ENCODE measurements at regions of chr7 and their contacts with region 1.

Region 1: GRCh38 chr7:129611246-129612111 is at the start of gene NRF1:
- DNase-seq: peak; percentile 82 to 92 (median 85)
- H3K4me3 ChIP-seq: peak within 1 kb of the TSS; percentile 91 to 94 (median 93)
- H3K4me3 Mint-ChIP-seq: peak within 1 kb of the TSS; percentile 90 to 94
- H3K27ac ChIP-seq: peak within 1 kb of the TSS; percentile 92 to 99
- H3K27ac Mint-ChIP-seq: peak within 1 kb of the TSS; percentile 92 to 98 (median 95)
- H3K4me1 ChIP-seq: peaks cover 63 to 83% of the 10 kb centered on the region in 2 donors
- H3K4me1 Mint-ChIP-seq: peaks cover 68% of the 10 kb centered on the region
- H3K27me3 ChIP-seq: no peaks in the 10 kb centered on the region
- H3K27me3 Mint-ChIP-seq: peaks cover 0 to 2% (median 0%) of the 10 kb centered on the region in 3 donors
- CTCF ChIP-seq: no peak
- polyA plus RNA-seq, gene NRF1: 5.1 to 14.0 (median 7.7) TPM

Region 2: DNA sequence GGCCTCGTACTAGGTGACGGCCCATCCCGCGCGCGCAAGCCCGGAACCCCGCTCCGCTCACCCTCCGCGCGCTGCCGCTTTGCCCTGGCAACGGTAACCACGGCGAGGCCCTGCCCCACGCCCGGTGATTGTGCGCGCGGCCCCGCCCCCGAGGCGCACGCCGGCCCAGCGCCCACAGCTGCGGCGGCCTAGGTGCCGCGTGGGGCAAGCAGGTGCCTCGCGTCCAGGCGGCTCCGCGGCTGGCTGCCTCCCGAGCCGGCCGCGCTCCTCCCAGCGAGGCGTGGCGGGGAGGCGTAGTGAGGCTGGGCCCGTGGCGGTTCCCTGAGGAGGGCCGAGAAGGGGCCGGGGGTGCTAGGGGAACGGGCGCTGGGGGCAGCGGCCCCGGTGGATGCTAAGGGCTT is 109.1 kb before region 1 on chr7 and contains the start of gene SMKR1:
- intact Hi-C with region 1: loop called in 1 of 2 experiments (anchors 10 kb)
- DNase-seq: peak; percentile 71 to 83 (median 75)
- H3K4me3 ChIP-seq: peak within 1 kb of the TSS; percentile 43 to 74 (median 45)
- H3K4me3 Mint-ChIP-seq: peak within 1 kb of the TSS; percentile 72 to 85
- H3K27ac ChIP-seq: no peak within 1 kb of the TSS
- H3K27ac Mint-ChIP-seq: peak within 1 kb of the TSS in 4 of 7 donors; percentile 18 to 79 (median 52)
- H3K4me1 ChIP-seq: peaks cover 11 to 15% of the 10 kb centered on the region in 2 donors
- H3K4me1 Mint-ChIP-seq: peaks cover 12% of the 10 kb centered on the region
- H3K27me3 ChIP-seq: peaks cover 2 to 21% of the 10 kb centered on the region in 2 donors
- H3K27me3 Mint-ChIP-seq: peaks cover 24 to 40% (median 27%) of the 10 kb centered on the region in 3 donors
- CTCF ChIP-seq: no peak
- polyA plus RNA-seq, gene SMKR1: not detected

Region 3: GRCh38 chr7:129553861-129554530 is 57.5 kb before region 1 on chr7:
- intact Hi-C with region 1: no loop called
- DNase-seq: peak in 1 of 3 donors; percentile 15
- H3K4me3 ChIP-seq: no peak overlapping the region
- H3K4me3 Mint-ChIP-seq: peak overlapping the region in 1 of 2 donors; percentile 53
- H3K27ac ChIP-seq: no peak overlapping the region
- H3K27ac Mint-ChIP-seq: no peak overlapping the region
- H3K4me1 ChIP-seq: peaks cover 0 to 4% of the 10 kb centered on the region in 2 donors
- H3K4me1 Mint-ChIP-seq: peaks cover 4% of the 10 kb centered on the region
- H3K27me3 ChIP-seq: no peaks in the 10 kb centered on the region
- H3K27me3 Mint-ChIP-seq: peaks cover 12 to 24% (median 18%) of the 10 kb centered on the region in 3 donors
- CTCF ChIP-seq: no peak

Region 4: DNA sequence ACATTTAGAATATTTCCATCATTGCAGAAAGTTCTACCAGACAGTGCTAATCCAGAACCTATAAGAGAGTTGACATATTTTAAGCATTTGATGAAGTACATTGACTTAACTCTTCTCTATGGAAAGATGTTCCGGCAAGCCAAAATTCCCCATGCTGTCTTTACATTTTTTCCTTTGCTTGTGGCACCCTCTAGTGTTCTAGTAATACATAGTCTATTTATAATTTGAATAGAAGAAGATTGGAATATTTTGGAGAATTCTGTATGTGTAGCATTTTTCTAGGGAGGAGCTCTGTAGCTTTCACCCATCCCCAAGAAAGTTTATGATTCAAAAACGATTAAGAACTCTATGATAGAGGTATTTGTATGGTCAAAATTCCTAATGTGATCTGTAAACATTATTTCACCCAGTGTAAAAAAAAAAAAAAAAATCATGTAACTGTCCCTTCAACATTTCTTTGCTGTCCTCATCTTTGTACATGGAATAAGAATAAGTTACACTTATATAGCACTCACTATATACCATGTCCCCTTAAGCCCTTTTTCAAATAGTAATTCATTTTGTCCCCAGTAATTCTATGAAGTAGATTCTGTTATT is 33.3 kb after region 1 on chr7:
- intact Hi-C with region 1: loop called in 1 of 2 experiments (anchors 5 kb)
- DNase-seq: peak; percentile 14 to 38 (median 31)
- H3K4me3 ChIP-seq: no peak overlapping the region
- H3K4me3 Mint-ChIP-seq: no peak overlapping the region
- H3K27ac ChIP-seq: no peak overlapping the region
- H3K27ac Mint-ChIP-seq: peak overlapping the region in 1 of 7 donors; percentile 23
- H3K4me1 ChIP-seq: no peaks in the 10 kb centered on the region
- H3K4me1 Mint-ChIP-seq: no peaks in the 10 kb centered on the region
- H3K27me3 ChIP-seq: no peaks in the 10 kb centered on the region
- H3K27me3 Mint-ChIP-seq: no peaks in the 10 kb centered on the region
- CTCF ChIP-seq: peak; percentile 56

Region 5: GRCh38 chr7:129702316-129702715 is 90.8 kb after region 1 on chr7:
- intact Hi-C with region 1: no loop called
- DNase-seq: no peak
- H3K4me3 ChIP-seq: no peak overlapping the region
- H3K4me3 Mint-ChIP-seq: no peak overlapping the region
- H3K27ac ChIP-seq: no peak overlapping the region
- H3K27ac Mint-ChIP-seq: no peak overlapping the region
- H3K4me1 ChIP-seq: no peaks in the 10 kb centered on the region
- H3K4me1 Mint-ChIP-seq: no peaks in the 10 kb centered on the region
- H3K27me3 ChIP-seq: no peaks in the 10 kb centered on the region
- H3K27me3 Mint-ChIP-seq: no peaks in the 10 kb centered on the region
- CTCF ChIP-seq: no peak

Measured in CD14-positive monocyte (primary cell).